HepG2 (cell line): ENCODE measurements at regions of chr3 and their contacts with region 1.

Region 1: GRCh38 chr3:31596176-31596575 is 63.5 kb downstream of the STT3B start:
- DNase-seq: no peak
- ATAC-seq: no peak
- H3K4me3 ChIP-seq: no peak overlapping the region
- H3K27ac ChIP-seq: no peak overlapping the region
- H3K4me1 ChIP-seq: peaks cover 18% of the 10 kb centered on the region
- H3K27me3 ChIP-seq: no peaks in the 10 kb centered on the region
- CTCF ChIP-seq: no peak
- EP300 ChIP-seq: no peak
- POLR2A ChIP-seq: no peak
- RAD21 ChIP-seq: no peak

Region 2: DNA sequence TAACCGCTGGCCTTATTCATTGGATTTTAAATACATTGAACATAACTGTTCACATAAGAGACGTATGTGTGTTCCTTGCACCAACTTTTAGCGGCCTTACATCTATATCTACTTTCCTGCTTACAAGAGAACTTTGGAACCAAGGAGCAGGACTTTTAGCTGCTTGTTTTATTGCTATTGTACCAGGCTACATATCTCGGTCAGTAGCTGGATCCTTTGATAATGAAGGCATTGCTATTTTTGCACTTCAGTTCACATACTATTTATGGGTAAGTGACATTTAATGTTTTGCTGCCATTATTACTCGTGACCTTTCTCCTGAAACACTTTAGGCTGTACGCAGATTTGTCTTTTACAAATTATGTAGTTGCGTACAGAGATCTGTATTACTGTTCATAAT is 16.3 kb before region 1 on chr3:
- CTCF ChIA-PET with region 1: no interaction called
- POLR2A ChIA-PET with region 1: interaction called, 3 read pairs
- in situ Hi-C with region 1: no loop called
- intact Hi-C with region 1: loop called (anchors 2 kb)
- DNase-seq: no peak
- ATAC-seq: no peak
- H3K4me3 ChIP-seq: no peak overlapping the region
- H3K27ac ChIP-seq: no peak overlapping the region
- H3K4me1 ChIP-seq: no peaks in the 10 kb centered on the region
- H3K27me3 ChIP-seq: no peaks in the 10 kb centered on the region
- CTCF ChIP-seq: no peak
- EP300 ChIP-seq: no peak
- POLR2A ChIP-seq: no peak
- RAD21 ChIP-seq: no peak